ENCODE measurements at regions of chr21 and their contacts with region 1.

Region 1: DNA sequence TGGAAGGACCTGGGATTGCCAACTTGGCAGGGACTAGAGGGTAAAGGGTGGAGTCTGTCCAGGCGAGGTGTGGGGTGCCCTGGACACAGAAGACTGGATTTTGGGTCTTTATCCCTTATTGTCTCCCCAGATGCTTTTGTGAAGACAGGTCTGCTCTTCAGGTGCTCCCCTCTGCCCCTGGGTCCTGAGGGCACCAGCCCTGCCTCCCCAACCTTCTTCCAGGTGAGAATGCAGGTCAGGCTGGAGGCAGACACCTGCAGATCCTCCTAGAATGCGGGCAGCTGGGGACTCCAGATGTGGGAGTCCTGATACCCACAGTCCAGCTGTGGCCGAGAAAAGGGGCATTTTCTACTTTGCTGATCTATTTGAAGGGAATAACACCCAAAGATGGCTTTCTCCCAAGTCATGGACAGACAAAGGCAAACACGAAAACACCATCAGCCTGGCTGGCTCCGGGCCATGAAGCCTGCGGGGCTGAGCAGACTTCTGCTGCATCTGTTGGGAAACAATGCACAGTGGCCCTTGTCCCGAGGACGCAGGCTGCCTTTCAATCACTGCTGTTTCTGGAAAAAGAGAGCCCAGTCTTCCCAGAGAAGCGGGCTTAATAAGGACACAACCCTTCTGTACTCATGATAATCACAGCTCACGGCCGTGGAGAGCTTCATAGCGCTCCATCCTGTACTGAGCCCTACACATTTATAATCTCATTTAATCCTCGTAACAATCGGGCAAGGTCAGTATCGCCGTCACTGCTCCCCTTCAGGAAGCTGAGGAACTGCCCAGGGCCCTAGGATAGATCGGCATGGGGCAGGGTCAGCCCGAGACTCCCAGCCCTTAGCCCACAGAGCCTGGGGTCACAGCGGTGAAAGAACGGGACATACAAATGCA is 62.0 kb upstream of the ABCG1 start:
- DNase-seq: peak; percentile 32 to 67 (median 54)
- H3K4me3 ChIP-seq: no peak overlapping the region
- H3K27ac ChIP-seq: no peak overlapping the region
- H3K4me1 ChIP-seq: no peaks in the 10 kb centered on the region
- H3K27me3 ChIP-seq: no peaks in the 10 kb centered on the region
- CTCF ChIP-seq: no peak
- EP300 ChIP-seq: no peak
- POLR2A ChIP-seq: no peak

Region 2: DNA sequence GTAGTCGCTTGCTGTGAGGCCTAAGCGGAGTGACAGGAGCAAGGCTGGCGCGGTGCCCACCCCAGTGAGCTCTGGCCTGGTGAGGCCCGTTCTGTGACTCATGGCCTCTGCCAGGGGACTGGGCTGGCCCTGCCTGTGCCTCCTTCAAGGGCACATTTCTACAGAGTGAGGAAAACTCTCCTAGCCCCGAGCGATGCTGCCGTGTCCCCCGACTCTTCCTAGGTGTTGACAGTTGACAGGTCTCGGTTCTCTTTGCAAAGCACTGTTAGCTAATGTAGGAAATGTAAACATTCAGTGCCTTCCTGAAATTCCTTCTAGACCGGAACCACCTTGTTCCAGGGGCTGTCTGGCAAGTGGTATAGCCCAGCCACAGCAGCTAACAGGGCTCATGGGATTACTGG is 105.9 kb after region 1 on chr21:
- intact Hi-C with region 1: no loop called
- DNase-seq: peak in 4 of 5 donors; percentile 31 to 57 (median 41)
- H3K4me3 ChIP-seq: no peak overlapping the region
- H3K27ac ChIP-seq: no peak overlapping the region
- H3K4me1 ChIP-seq: no peaks in the 10 kb centered on the region
- H3K27me3 ChIP-seq: no peaks in the 10 kb centered on the region
- CTCF ChIP-seq: no peak
- EP300 ChIP-seq: no peak
- POLR2A ChIP-seq: no peak

Region 3: GRCh38 chr21:42276526-42277154 is 119.7 kb after region 1 on chr21:
- intact Hi-C with region 1: loop called in 1 of 4 experiments (anchors 10 kb)
- DNase-seq: no peak
- H3K4me3 ChIP-seq: no peak overlapping the region
- H3K27ac ChIP-seq: no peak overlapping the region
- H3K4me1 ChIP-seq: no peaks in the 10 kb centered on the region
- H3K27me3 ChIP-seq: no peaks in the 10 kb centered on the region
- CTCF ChIP-seq: no peak
- EP300 ChIP-seq: no peak
- POLR2A ChIP-seq: no peak

Region 4: DNA sequence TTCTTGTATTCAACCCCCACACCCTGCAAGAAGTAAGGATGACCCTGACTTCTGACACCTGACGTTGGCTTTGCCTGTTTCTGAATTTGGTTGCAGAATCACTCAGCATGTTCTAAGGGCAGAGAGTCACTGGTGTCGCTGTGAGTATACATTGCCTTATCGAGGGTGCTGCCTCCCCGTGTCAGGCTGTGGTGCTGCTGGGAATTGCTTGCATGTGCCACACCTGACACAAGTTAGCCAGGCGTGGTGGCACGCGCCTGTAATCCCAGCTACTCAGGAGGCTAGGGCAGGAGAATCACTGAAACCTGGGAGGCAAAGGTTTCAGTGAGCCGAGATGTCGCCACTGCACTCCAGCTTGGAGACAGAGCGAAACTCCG is 676.5 kb after region 1 on chr21:
- intact Hi-C with region 1: loop called in 1 of 4 experiments (anchors 10 kb)
- DNase-seq: no peak
- H3K4me3 ChIP-seq: no peak overlapping the region
- H3K27ac ChIP-seq: no peak overlapping the region
- H3K4me1 ChIP-seq: peaks cover 2% of the 10 kb centered on the region
- H3K27me3 ChIP-seq: no peaks in the 10 kb centered on the region
- CTCF ChIP-seq: no peak
- EP300 ChIP-seq: no peak
- POLR2A ChIP-seq: no peak